ENCODE measurements at regions of chr4 and their contacts with region 1.

Region 1: DNA sequence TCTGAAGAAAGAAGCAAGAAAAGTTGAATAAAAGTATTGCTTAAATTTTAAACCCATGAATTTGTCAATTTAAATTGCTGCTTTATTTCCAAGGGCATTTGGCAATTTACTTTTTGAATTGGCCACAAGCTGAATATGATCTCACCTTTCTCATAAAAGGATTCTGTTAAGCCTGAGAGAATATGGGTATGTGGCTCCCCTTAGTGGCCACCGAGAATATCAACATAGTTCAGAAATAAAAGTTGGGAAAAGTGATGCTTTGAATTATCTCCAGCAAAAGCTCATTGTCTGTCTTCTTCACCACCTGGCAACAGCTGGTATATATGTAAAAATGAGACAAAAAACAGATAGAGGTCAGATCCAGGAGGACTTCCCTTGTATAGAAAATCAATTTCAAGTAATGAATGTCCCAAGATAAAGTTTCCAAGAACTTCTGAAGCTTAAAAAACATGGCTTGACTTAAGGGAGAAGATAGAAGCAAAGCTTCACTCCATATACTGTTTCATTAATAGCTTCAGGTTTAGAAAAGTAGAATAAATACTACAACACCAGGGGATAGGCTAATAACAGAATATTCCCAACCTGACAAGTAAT is 290.7 kb upstream of the FAM241A start:
- DNase-seq: peak; percentile 1 to 31
- ATAC-seq: peak in 1 of 2 experiments; percentile 80; a peak in 3 of 6 replicates
- H3K4me3 ChIP-seq: no peak overlapping the region
- H3K27ac ChIP-seq: no peak overlapping the region
- H3K4me1 ChIP-seq: no peaks in the 10 kb centered on the region
- CTCF ChIP-seq: peak; percentile 69
- EP300 ChIP-seq: no peak
- POLR2A ChIP-seq: no peak
- RAD21 ChIP-seq: peak; percentile 68 to 72

Region 2: GRCh38 chr4:111871802-111872201 is 17.2 kb after region 1 on chr4:
- CTCF ChIA-PET with region 1: interaction called, 10 read pairs
- POLR2A ChIA-PET with region 1: no interaction called
- DNase-seq: no peak
- ATAC-seq: no peak
- H3K4me3 ChIP-seq: no peak overlapping the region
- H3K27ac ChIP-seq: no peak overlapping the region
- H3K4me1 ChIP-seq: no peaks in the 10 kb centered on the region
- CTCF ChIP-seq: no peak
- EP300 ChIP-seq: no peak
- POLR2A ChIP-seq: no peak
- RAD21 ChIP-seq: no peak

Region 3: GRCh38 chr4:111952688-111953087 is 98.1 kb after region 1 on chr4:
- CTCF ChIA-PET with region 1: no interaction called
- POLR2A ChIA-PET with region 1: no interaction called
- DNase-seq: no peak
- ATAC-seq: no peak
- H3K4me3 ChIP-seq: no peak overlapping the region
- H3K27ac ChIP-seq: no peak overlapping the region
- H3K4me1 ChIP-seq: no peaks in the 10 kb centered on the region; the same call in 2 of the 3 replicates
- CTCF ChIP-seq: no peak
- EP300 ChIP-seq: no peak
- POLR2A ChIP-seq: no peak
- RAD21 ChIP-seq: no peak

Region 4: DNA sequence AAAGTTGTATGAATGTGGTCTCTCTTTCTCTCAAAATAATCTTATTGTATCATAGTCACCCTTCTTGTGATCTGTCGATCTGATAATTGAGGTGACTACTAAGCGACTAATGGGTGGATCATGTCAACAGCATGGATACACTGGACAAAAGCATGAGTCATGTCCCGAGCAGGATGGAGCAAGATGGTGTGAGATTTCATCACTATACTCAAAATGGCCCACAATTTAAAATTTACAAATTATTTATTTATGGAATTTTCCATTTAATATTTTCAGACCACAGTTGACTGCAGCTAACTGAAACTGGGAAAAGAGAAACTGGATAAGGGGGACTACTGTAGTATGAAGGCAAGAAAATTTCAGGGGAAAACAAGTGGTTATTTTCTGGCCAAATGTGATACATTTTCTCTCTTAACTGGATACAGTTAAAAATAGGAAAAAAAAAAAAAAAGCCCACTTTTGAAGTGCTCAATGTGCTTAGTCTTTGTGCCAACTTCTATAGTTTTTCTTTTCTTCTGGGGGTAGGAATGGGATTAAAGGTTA is 315.9 kb after region 1 on chr4:
- CTCF ChIA-PET with region 1: no interaction called
- POLR2A ChIA-PET with region 1: no interaction called
- DNase-seq: peak; percentile 60 to 78
- ATAC-seq: peak; percentile 80 to 85; a peak in 5 of 6 replicates
- H3K4me3 ChIP-seq: no peak overlapping the region
- H3K27ac ChIP-seq: peak overlapping the region; percentile 75 to 84
- H3K4me1 ChIP-seq: peaks cover 20% of the 10 kb centered on the region
- CTCF ChIP-seq: no peak
- EP300 ChIP-seq: no peak
- POLR2A ChIP-seq: no peak
- RAD21 ChIP-seq: no peak

Region 5: GRCh38 chr4:112889619-112890527 is 1035.3 kb after region 1 on chr4:
- CTCF ChIA-PET with region 1: no interaction called
- POLR2A ChIA-PET with region 1: no interaction called
- DNase-seq: no peak
- ATAC-seq: no peak
- H3K4me3 ChIP-seq: no peak overlapping the region
- H3K27ac ChIP-seq: no peak overlapping the region
- H3K4me1 ChIP-seq: no peaks in the 10 kb centered on the region
- CTCF ChIP-seq: no peak
- EP300 ChIP-seq: no peak
- POLR2A ChIP-seq: no peak
- RAD21 ChIP-seq: no peak